CD4-positive, alpha-beta memory T cell (primary cell): ENCODE measurements at regions of chr3 and their contacts with region 1.

Region 1: GRCh38 chr3:4633078-4634004 is 140.2 kb downstream of the ITPR1 start:
- DNase-seq: peak in 4 of 5 donors; percentile 38 to 50 (median 44)
- H3K4me3 ChIP-seq: no peak overlapping the region
- H3K4me3 Mint-ChIP-seq: no peak overlapping the region
- H3K27ac ChIP-seq: no peak overlapping the region
- H3K27ac Mint-ChIP-seq: peak overlapping the region in 1 of 7 donors; percentile 52
- H3K4me1 ChIP-seq: no peaks in the 10 kb centered on the region
- H3K4me1 Mint-ChIP-seq: peaks cover 6 to 11% (median 8%) of the 10 kb centered on the region in 4 donors
- H3K27me3 ChIP-seq: no peaks in the 10 kb centered on the region
- H3K27me3 Mint-ChIP-seq: no peaks in the 10 kb centered on the region

Region 2: DNA sequence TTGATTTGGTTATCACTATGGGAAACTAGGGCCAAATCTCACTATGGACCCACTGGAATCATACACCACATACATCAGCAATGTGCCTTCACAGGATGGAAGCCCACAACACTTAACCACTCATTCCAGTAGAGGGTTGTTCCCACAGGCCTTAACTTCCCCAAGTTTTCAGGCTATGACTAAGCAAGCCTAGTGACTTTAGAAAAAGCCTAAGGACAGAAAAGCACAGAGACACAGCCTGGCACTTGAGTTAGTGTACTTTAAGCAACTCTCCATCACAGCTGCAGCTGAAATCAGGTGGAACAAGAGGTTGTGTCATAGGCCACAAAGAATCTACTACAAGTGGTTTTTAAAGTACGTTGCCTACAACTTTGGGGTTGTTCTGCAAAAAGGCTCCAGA is 705.4 kb before region 1 on chr3:
- CTCF ChIA-PET with region 1: no interaction called
- POLR2A ChIA-PET with region 1: no interaction called
- intact Hi-C with region 1: no loop called
- DNase-seq: no peak
- H3K4me3 ChIP-seq: no peak overlapping the region
- H3K4me3 Mint-ChIP-seq: no peak overlapping the region
- H3K27ac ChIP-seq: no peak overlapping the region
- H3K27ac Mint-ChIP-seq: no peak overlapping the region
- H3K4me1 ChIP-seq: no peaks in the 10 kb centered on the region
- H3K4me1 Mint-ChIP-seq: no peaks in the 10 kb centered on the region
- H3K27me3 ChIP-seq: no peaks in the 10 kb centered on the region
- H3K27me3 Mint-ChIP-seq: no peaks in the 10 kb centered on the region

Region 3: DNA sequence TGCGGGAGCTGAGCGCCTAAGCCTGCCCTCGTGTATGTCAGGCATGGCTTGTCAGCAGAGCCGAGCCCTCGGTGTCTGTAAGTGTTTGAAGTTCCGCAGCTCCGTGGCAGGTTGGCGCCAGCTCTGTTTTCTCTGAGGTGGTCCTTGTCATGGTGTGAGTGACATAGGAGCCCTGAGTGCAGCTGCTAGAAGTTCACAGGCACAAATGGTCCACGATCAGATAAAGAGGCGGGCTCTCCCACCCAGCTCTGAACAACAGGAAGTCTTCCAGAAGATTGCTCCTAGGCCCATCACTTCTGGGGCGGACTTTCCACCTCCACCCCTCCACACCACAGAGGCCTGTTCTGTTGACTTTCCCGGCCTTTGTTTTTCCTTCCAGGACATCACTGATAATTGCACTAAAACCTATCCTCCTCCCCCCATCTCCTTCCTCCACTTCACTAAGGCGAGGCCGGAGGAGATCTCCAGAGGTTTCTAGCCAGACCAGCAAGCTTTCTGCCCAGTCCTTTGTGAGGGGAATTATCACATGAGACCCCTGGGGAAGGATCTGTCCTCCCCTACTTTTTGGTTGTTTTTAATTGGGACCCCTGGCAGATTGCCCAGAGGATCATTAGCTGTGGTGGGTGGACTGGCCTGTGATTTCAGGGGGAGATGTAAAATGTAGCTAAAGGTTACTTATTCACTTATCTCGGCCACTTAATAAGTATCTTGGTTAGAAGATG is 120.3 kb before region 1 on chr3:
- CTCF ChIA-PET with region 1: interaction called, 44 read pairs
- POLR2A ChIA-PET with region 1: no interaction called
- intact Hi-C with region 1: no loop called
- DNase-seq: no peak
- H3K4me3 ChIP-seq: no peak overlapping the region
- H3K4me3 Mint-ChIP-seq: no peak overlapping the region
- H3K27ac ChIP-seq: no peak overlapping the region
- H3K27ac Mint-ChIP-seq: peak overlapping the region in 2 of 7 donors; percentile 39
- H3K4me1 ChIP-seq: peaks cover 12% of the 10 kb centered on the region
- H3K4me1 Mint-ChIP-seq: peaks cover 17 to 20% (median 19%) of the 10 kb centered on the region in 4 donors
- H3K27me3 ChIP-seq: no peaks in the 10 kb centered on the region
- H3K27me3 Mint-ChIP-seq: no peaks in the 10 kb centered on the region

Region 4: GRCh38 chr3:4524088-4525023 is 109.0 kb before region 1 on chr3:
- CTCF ChIA-PET with region 1: interaction called, 44 read pairs
- POLR2A ChIA-PET with region 1: no interaction called
- intact Hi-C with region 1: loop called (anchors 1 kb)
- DNase-seq: no peak
- H3K4me3 ChIP-seq: no peak overlapping the region
- H3K4me3 Mint-ChIP-seq: no peak overlapping the region
- H3K27ac ChIP-seq: no peak overlapping the region
- H3K27ac Mint-ChIP-seq: no peak overlapping the region
- H3K4me1 ChIP-seq: peaks cover 6% of the 10 kb centered on the region
- H3K4me1 Mint-ChIP-seq: peaks cover 8 to 23% (median 16%) of the 10 kb centered on the region in 4 donors
- H3K27me3 ChIP-seq: no peaks in the 10 kb centered on the region
- H3K27me3 Mint-ChIP-seq: no peaks in the 10 kb centered on the region

Region 5: GRCh38 chr3:4656059-4656458 is 22.7 kb after region 1 on chr3:
- CTCF ChIA-PET with region 1: interaction called, 10 read pairs
- POLR2A ChIA-PET with region 1: no interaction called
- intact Hi-C with region 1: no loop called
- DNase-seq: no peak
- H3K4me3 ChIP-seq: no peak overlapping the region
- H3K4me3 Mint-ChIP-seq: no peak overlapping the region
- H3K27ac ChIP-seq: no peak overlapping the region
- H3K27ac Mint-ChIP-seq: no peak overlapping the region
- H3K4me1 ChIP-seq: no peaks in the 10 kb centered on the region
- H3K4me1 Mint-ChIP-seq: no peaks in the 10 kb centered on the region
- H3K27me3 ChIP-seq: no peaks in the 10 kb centered on the region
- H3K27me3 Mint-ChIP-seq: no peaks in the 10 kb centered on the region

Region 6: DNA sequence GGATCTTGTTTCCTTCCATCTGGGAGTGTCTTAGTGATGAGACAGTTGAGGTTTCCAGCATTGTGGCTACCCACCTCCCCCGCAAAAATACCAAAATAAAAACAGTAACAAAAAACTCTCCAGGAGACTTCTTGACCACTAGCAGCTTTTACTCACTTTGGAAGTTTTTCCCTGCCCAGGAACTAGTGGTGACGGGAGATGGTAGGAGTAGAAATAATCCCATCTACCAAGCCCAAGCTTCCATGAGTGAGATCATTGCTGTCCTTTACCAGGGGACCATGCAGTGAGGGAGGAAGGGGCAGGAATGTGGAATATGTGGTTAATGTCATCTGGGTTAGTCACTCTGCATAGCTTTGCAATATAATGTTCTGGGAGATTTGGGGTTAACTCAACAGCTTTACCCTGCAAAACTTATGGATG is 47.5 kb after region 1 on chr3:
- CTCF ChIA-PET with region 1: no interaction called
- POLR2A ChIA-PET with region 1: no interaction called
- intact Hi-C with region 1: no loop called
- DNase-seq: no peak
- H3K4me3 ChIP-seq: no peak overlapping the region
- H3K4me3 Mint-ChIP-seq: no peak overlapping the region
- H3K27ac ChIP-seq: no peak overlapping the region
- H3K27ac Mint-ChIP-seq: peak overlapping the region in 1 of 7 donors; percentile 15
- H3K4me1 ChIP-seq: no peaks in the 10 kb centered on the region
- H3K4me1 Mint-ChIP-seq: no peaks in the 10 kb centered on the region
- H3K27me3 ChIP-seq: no peaks in the 10 kb centered on the region
- H3K27me3 Mint-ChIP-seq: no peaks in the 10 kb centered on the region